B cell (primary cell): ENCODE measurements at regions of chr9 and their contacts with region 1.

Region 1: GRCh38 chr9:90007516-90008440 is 403.0 kb downstream of the GADD45G start:
- DNase-seq: no peak
- ATAC-seq: no peak
- H3K4me3 ChIP-seq: no peak overlapping the region
- H3K4me3 Mint-ChIP-seq: peak overlapping the region; percentile 13
- H3K27ac ChIP-seq: no peak overlapping the region
- H3K27ac Mint-ChIP-seq: peak overlapping the region; percentile 34
- H3K4me1 ChIP-seq: peaks cover 41 to 44% of the 10 kb centered on the region in 2 donors
- H3K4me1 Mint-ChIP-seq: peaks cover 36% of the 10 kb centered on the region
- H3K27me3 ChIP-seq: no peaks in the 10 kb centered on the region
- H3K27me3 Mint-ChIP-seq: no peaks in the 10 kb centered on the region
- CTCF ChIP-seq: no peak

Region 2: DNA sequence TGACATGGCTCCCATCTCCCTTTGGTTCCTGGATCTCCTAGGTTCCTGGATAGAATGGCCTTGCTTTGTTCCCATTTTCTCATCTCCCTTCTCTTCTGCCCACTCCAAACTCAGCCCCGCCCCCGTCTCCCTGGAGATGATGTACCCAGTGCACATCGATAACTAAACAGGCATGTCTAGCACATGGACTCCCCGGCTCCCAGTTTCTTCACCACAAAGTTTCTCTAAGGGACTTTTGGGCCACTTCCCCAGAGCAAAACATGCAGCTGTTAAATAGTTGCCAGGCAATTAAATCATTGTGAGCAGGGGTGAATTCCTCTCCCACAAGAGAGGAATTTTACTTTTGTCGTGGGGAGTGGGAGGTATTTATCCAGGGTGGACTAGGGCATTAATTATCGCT is 143.9 kb before region 1 on chr9:
- CTCF ChIA-PET with region 1: no interaction called
- POLR2A ChIA-PET with region 1: no interaction called
- intact Hi-C with region 1: no loop called
- DNase-seq: no peak
- ATAC-seq: no peak
- H3K4me3 ChIP-seq: no peak overlapping the region
- H3K4me3 Mint-ChIP-seq: no peak overlapping the region
- H3K27ac ChIP-seq: no peak overlapping the region
- H3K27ac Mint-ChIP-seq: no peak overlapping the region
- H3K4me1 ChIP-seq: no peaks in the 10 kb centered on the region
- H3K4me1 Mint-ChIP-seq: no peaks in the 10 kb centered on the region
- H3K27me3 ChIP-seq: no peaks in the 10 kb centered on the region
- H3K27me3 Mint-ChIP-seq: peaks cover 12% of the 10 kb centered on the region
- CTCF ChIP-seq: no peak

Region 3: GRCh38 chr9:90025816-90026215 is 18.0 kb after region 1 on chr9:
- CTCF ChIA-PET with region 1: interaction called, 6 read pairs
- POLR2A ChIA-PET with region 1: interaction called, 3 read pairs
- intact Hi-C with region 1: loop called (anchors 2 kb)
- DNase-seq: peak; percentile 35
- ATAC-seq: no peak
- H3K4me3 ChIP-seq: no peak overlapping the region
- H3K4me3 Mint-ChIP-seq: no peak overlapping the region
- H3K27ac ChIP-seq: no peak overlapping the region
- H3K27ac Mint-ChIP-seq: peak overlapping the region; percentile 53
- H3K4me1 ChIP-seq: peaks cover 56 to 57% of the 10 kb centered on the region in 2 donors
- H3K4me1 Mint-ChIP-seq: peaks cover 56% of the 10 kb centered on the region
- H3K27me3 ChIP-seq: no peaks in the 10 kb centered on the region
- H3K27me3 Mint-ChIP-seq: no peaks in the 10 kb centered on the region
- CTCF ChIP-seq: no peak